A673 (cell line): ENCODE measurements at regions of chr1 and their contacts with region 1.

Region 1: DNA sequence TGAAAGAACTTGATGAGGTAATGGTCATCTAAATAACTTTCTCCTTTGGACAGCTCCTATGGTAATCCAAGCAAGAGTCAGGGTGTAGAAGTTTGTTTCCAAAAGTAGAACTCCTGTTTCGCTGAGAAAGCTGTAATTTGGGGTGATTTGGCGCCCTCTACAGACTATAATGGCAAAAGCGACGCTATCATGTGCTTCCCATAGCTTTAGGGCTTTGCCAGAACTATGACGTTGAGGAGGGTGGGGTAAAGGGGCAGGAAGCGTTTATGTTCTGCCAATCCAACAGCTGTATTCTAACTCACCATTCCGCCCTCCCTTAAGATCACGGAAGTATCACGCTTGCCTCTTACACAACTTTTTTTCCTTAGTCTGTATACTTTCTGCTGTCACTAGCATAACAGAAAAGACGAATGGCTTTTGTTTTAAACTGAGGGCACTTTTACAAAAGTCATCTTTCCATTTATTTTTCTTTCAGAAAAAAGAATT is at the start of gene FMO4:
- DNase-seq: peak; percentile 99
- H3K4me3 ChIP-seq: peak within 1 kb of the TSS; percentile 21
- H3K27ac ChIP-seq: peak within 1 kb of the TSS; percentile 59
- H3K4me1 ChIP-seq: peaks cover 5% of the 10 kb centered on the region
- H3K27me3 ChIP-seq: no peaks in the 10 kb centered on the region
- CTCF ChIP-seq: peak; percentile 95
- total RNA-seq, gene FMO4: 0.56 and 2.1 TPM in 2 replicates

Region 2: GRCh38 chr1:170967042-170967910 is 346.6 kb before region 1 on chr1:
- CTCF ChIA-PET with region 1: interaction called, 32 read pairs
- POLR2A ChIA-PET with region 1: no interaction called
- intact Hi-C with region 1: loop called (anchors 1 kb)
- DNase-seq: peak; percentile 59
- H3K4me3 ChIP-seq: no peak overlapping the region
- H3K27ac ChIP-seq: no peak overlapping the region
- H3K4me1 ChIP-seq: no peaks in the 10 kb centered on the region
- H3K27me3 ChIP-seq: no peaks in the 10 kb centered on the region
- CTCF ChIP-seq: peak; percentile 71

Region 3: GRCh38 chr1:171081314-171081753 is 232.5 kb before region 1 on chr1:
- CTCF ChIA-PET with region 1: interaction called, 12 read pairs
- POLR2A ChIA-PET with region 1: no interaction called
- intact Hi-C with region 1: loop called (anchors 10 kb)
- DNase-seq: peak; percentile 53
- H3K4me3 ChIP-seq: no peak overlapping the region
- H3K27ac ChIP-seq: no peak overlapping the region
- H3K4me1 ChIP-seq: peaks cover 4% of the 10 kb centered on the region
- H3K27me3 ChIP-seq: no peaks in the 10 kb centered on the region
- CTCF ChIP-seq: peak; percentile 64

Region 4: GRCh38 chr1:171179318-171180227 is 134.3 kb before region 1 on chr1:
- CTCF ChIA-PET with region 1: no interaction called
- POLR2A ChIA-PET with region 1: no interaction called
- intact Hi-C with region 1: loop called (anchors 5 kb)
- DNase-seq: peak; percentile 40
- H3K4me3 ChIP-seq: no peak overlapping the region
- H3K27ac ChIP-seq: peak overlapping the region; percentile 65
- H3K4me1 ChIP-seq: peaks cover 32% of the 10 kb centered on the region
- H3K27me3 ChIP-seq: no peaks in the 10 kb centered on the region
- CTCF ChIP-seq: no peak

Region 5: GRCh38 chr1:171188388-171189266 is 125.3 kb before region 1 on chr1:
- CTCF ChIA-PET with region 1: interaction called, 14 read pairs
- POLR2A ChIA-PET with region 1: no interaction called
- intact Hi-C with region 1: no loop called
- DNase-seq: peak; percentile 83
- H3K4me3 ChIP-seq: no peak overlapping the region
- H3K27ac ChIP-seq: no peak overlapping the region
- H3K4me1 ChIP-seq: peaks cover 8% of the 10 kb centered on the region
- H3K27me3 ChIP-seq: no peaks in the 10 kb centered on the region
- CTCF ChIP-seq: peak; percentile 97

Region 6: DNA sequence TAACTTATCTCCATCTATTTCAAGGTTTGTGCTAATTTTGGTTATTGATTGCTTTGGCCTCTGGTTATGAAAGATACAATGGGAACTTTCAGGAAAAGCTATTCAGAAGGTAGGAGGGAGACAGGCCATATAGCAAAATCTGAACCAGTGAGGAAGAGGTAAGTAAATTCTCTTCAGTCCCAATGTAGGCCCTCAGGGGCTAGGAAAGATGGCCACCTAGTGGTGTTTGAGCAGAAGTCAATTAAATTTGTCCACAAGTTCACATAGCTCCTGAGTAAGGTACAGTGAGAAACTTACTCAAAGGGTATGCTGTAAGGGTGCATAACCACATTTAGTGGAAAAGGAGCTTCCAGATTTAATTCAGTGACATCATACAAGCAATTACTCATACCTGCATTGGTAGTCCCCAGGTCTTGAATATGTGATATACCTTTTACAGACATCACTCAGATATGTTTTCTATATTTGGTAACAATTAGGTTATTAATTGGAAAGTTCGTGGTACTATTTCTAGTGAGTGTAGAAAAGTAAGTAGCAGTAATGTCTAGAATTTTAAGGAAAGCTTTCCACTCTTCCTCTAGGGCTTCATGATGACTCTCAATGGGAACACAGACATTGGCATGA is 87.0 kb before region 1 on chr1:
- CTCF ChIA-PET with region 1: interaction called, 7 read pairs
- POLR2A ChIA-PET with region 1: no interaction called
- intact Hi-C with region 1: loop called (anchors 5 kb)
- DNase-seq: peak; percentile 87
- H3K4me3 ChIP-seq: no peak overlapping the region
- H3K27ac ChIP-seq: no peak overlapping the region
- H3K4me1 ChIP-seq: peaks cover 18% of the 10 kb centered on the region
- H3K27me3 ChIP-seq: no peaks in the 10 kb centered on the region
- CTCF ChIP-seq: peak; percentile 84

Region 7: GRCh38 chr1:171245458-171246064 is 68.3 kb before region 1 on chr1:
- CTCF ChIA-PET with region 1: interaction called, 19 read pairs
- POLR2A ChIA-PET with region 1: no interaction called
- intact Hi-C with region 1: loop called (anchors 5 kb)
- DNase-seq: peak; percentile 52
- H3K4me3 ChIP-seq: no peak overlapping the region
- H3K27ac ChIP-seq: no peak overlapping the region
- H3K4me1 ChIP-seq: no peaks in the 10 kb centered on the region
- H3K27me3 ChIP-seq: no peaks in the 10 kb centered on the region
- CTCF ChIP-seq: peak; percentile 81

Region 8: DNA sequence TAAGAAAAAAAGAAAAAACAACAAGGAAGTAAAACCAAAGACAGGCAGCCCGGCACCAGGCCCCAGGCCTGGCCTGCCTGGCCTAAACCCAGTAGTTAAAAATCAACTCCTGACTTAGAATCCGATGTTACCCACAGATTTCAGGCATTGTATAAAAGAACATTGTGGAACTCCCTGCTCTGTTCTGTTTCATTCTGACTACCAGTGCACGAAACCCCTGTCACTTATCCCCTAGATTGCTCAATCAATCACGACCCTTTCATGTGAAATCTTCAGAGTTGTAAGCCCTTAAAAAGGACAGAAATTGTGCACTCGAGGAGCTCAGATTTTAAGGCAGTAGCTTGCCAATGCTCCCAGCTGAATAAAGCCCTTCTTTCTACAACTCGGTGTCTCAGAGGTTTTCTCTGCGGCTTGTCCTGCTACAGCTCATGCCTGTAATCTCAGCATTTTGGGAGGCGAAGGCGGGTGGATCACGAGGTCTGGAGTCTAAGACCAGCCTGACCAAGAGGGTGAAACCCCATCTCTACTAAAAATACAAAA is 292.6 kb after region 1 on chr1:
- CTCF ChIA-PET with region 1: no interaction called
- POLR2A ChIA-PET with region 1: no interaction called
- intact Hi-C with region 1: no loop called
- DNase-seq: no peak
- H3K4me3 ChIP-seq: no peak overlapping the region
- H3K27ac ChIP-seq: no peak overlapping the region
- H3K4me1 ChIP-seq: no peaks in the 10 kb centered on the region
- H3K27me3 ChIP-seq: no peaks in the 10 kb centered on the region
- CTCF ChIP-seq: no peak

Region 9: DNA sequence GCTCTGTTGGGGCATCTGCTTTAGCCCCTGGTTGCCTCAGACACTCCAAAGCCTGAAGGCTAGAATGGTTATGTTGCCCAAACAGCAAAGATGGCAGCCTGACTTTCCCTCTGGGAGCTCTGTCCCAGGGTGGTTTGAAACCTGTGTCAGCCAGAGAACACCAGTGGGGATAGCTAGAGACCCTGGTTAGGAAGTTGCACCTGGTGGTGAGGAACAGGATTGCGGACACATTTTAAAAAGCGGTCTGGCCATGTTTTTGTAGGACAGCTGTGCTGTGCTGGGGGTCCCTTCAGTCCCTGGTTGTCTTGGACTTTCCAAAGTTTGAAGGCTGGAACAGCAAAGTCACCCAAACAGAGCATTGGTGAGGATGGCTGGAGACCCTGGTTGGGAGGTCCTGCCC is 615.2 kb after region 1 on chr1:
- CTCF ChIA-PET with region 1: no interaction called
- POLR2A ChIA-PET with region 1: no interaction called
- intact Hi-C with region 1: no loop called
- DNase-seq: no peak
- H3K4me3 ChIP-seq: no peak overlapping the region
- H3K27ac ChIP-seq: no peak overlapping the region
- H3K4me1 ChIP-seq: no peaks in the 10 kb centered on the region
- H3K27me3 ChIP-seq: no peaks in the 10 kb centered on the region
- CTCF ChIP-seq: peak; percentile 38